Adrenal gland (tissue), 19 donors: ENCODE measurements at regions of chr19 and their contacts with region 1.

Region 1: GRCh38 chr19:13597640-13598039 is 91.4 kb upstream of the CACNA1A start:
- DNase-seq: peak; percentile 33 to 71 (median 46)
- H3K4me3 ChIP-seq: no peak overlapping the region
- H3K27ac ChIP-seq: no peak overlapping the region
- H3K4me1 ChIP-seq: no peaks in the 10 kb centered on the region
- H3K27me3 ChIP-seq: peaks cover 3% of the 10 kb centered on the region
- CTCF ChIP-seq: peak; percentile 27 to 73 (median 59)
- POLR2A ChIP-seq: no peak

Region 2: DNA sequence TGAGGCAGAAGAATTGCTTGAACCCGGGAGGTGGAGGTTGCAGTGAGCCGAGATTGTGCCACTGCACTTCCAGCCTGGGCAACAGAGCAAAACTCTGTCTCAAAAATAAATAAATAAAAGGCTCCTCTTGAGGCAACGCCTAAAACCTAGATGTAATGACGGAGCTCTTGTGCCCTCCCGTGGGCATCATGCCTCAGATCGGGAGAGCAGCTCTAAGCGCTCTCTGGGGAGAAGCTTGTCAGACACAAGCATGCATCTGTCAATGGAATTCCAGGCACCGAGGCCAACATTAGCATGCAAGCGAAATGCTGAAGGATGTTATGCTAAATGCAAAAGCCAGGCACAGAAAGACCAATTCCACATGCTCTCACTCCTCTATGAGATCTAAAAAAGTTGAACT is 121.1 kb after region 1 on chr19:
- intact Hi-C with region 1: loop called (anchors 5 to 10 kb)
- DNase-seq: peak in 2 of 7 donors; percentile 14 to 75
- H3K4me3 ChIP-seq: no peak overlapping the region
- H3K27ac ChIP-seq: no peak overlapping the region
- H3K4me1 ChIP-seq: no peaks in the 10 kb centered on the region
- H3K27me3 ChIP-seq: no peaks in the 10 kb centered on the region
- CTCF ChIP-seq: peak in 3 of 6 experiments; percentile 12 to 32 (median 25)
- POLR2A ChIP-seq: no peak

Region 3: DNA sequence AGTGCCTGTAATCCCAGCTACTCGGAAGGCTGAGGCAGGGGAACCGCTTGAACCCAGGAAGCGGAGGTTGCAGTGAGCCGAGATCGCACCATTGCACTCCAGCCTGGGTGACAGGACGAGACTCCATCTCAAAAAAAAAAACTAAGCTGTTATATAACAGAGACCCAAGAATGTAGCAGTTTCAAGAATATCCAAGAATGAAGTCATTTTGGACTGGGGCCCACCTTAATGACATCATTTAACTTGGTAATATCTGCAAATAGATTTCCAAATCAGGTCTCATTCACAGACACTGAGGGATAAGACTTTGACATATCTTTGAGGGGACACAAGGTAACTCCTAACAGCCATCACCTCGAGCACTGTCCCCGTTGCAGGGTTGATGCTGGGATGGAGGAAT is 130.2 kb after region 1 on chr19:
- intact Hi-C with region 1: loop called (anchors 5 to 10 kb)
- DNase-seq: no peak
- H3K4me3 ChIP-seq: no peak overlapping the region
- H3K27ac ChIP-seq: no peak overlapping the region
- H3K4me1 ChIP-seq: peaks cover 18 to 21% of the 10 kb centered on the region in 2 donors
- H3K27me3 ChIP-seq: no peaks in the 10 kb centered on the region
- CTCF ChIP-seq: no peak
- POLR2A ChIP-seq: no peak

Region 4: GRCh38 chr19:13861732-13862531 is 264.3 kb after region 1 on chr19:
- intact Hi-C with region 1: loop called (anchors 5 to 10 kb)
- DNase-seq: peak; percentile 89 to 97 (median 93)
- H3K4me3 ChIP-seq: peak overlapping the region in 3 of 4 donors; percentile 23 to 43 (median 28)
- H3K27ac ChIP-seq: peak overlapping the region; percentile 9 to 84 (median 77)
- H3K4me1 ChIP-seq: peaks cover 6 to 10% of the 10 kb centered on the region in 2 donors
- H3K27me3 ChIP-seq: peaks cover 5% of the 10 kb centered on the region
- CTCF ChIP-seq: peak; percentile 99 to 100 (median 100)
- POLR2A ChIP-seq: peak in 1 of 2 donors; percentile 40

Region 5: DNA sequence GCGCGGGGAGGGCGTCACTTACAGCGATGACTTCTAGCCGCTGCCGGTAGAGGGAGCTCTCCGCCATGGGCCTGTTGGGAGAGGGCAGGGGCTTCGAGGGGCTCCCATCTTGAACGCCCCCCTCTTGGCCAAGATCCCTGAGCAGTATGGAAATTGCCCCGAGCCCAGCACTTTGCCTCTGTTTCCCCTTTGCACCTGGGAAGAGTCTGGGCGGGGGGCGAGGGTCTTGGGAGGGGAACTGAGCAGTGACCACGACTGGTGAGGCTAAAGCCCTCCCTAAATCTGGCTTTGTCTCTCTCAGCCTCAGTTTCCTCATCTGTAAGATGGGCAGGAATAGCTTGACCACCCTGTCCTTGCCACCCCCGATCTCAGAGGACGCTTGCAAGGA is 461.4 kb after region 1 on chr19:
- intact Hi-C with region 1: loop called in 1 of 2 experiments (anchors 10 kb)
- DNase-seq: no peak
- H3K4me3 ChIP-seq: no peak overlapping the region
- H3K27ac ChIP-seq: no peak overlapping the region
- H3K4me1 ChIP-seq: peaks cover 0 to 4% of the 10 kb centered on the region in 2 donors
- H3K27me3 ChIP-seq: peaks cover 15% of the 10 kb centered on the region
- CTCF ChIP-seq: peak; percentile 18 to 46 (median 38)
- POLR2A ChIP-seq: no peak